Caco-2 (cell line): ENCODE measurements at regions of chr22 and their contacts with region 1.

Region 1: GRCh38 chr22:46116491-46116958 is 33.8 kb upstream of the PPARA start:
- DNase-seq: peak; percentile 90 to 94
- H3K4me3 ChIP-seq: no peak overlapping the region
- H3K4me3 Mint-ChIP-seq: no peak overlapping the region
- H3K27ac Mint-ChIP-seq: no peak overlapping the region
- H3K4me1 ChIP-seq: peaks cover 7% of the 10 kb centered on the region
- H3K4me1 Mint-ChIP-seq: no peaks in the 10 kb centered on the region
- H3K27me3 ChIP-seq: no peaks in the 10 kb centered on the region
- H3K27me3 Mint-ChIP-seq: no peaks in the 10 kb centered on the region
- CTCF ChIP-seq: peak; percentile 80 to 98

Region 2: DNA sequence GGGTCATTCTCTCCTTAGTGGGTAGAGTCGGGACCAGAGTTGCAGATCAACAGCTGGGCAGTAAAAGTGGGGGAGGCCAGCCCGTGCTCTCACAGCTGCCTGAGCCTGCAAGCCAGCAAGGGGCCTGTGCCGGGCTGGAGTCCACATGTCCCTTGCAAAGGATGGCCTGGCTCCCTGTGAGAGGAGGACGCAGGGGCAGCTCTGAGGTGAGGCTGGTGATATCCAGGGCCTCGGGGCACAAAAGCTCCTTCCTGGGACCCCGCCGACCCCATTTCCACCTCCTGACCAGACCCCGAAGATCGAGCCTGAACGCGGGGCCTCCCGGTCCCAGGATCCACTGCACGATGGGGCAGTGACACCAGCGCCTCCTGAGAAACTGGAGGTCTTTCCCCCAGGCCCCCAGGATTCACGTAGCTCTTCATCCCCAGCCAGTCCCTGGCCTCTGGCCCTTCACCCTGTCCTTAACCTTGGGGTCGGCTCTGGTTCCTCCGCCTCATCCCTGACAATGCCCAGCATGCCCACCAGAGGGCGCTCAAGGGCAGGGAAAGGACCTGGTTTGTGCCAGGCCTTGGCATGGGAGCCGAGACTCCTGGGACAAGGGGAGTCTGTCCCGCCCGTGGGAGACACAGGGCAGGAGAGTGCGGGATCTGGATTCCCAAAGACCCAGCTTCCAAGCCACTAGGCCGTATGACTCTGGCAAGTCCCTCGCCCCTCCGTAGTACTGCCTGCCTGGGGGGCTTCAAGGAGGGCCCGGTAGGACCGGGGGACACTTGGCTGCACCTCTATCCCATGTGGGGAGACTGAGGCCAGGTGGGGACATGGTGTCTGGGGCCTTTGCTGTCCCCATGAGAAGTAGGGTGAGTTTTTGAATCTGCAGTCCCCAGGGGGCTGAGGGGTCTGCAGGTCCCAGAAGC is 121.8 kb before region 1 on chr22:
- CTCF ChIA-PET with region 1: interaction called, 4 read pairs
- POLR2A ChIA-PET with region 1: no interaction called
- intact Hi-C with region 1: loop called (anchors 1 kb)
- DNase-seq: peak; percentile 73 to 90
- H3K4me3 ChIP-seq: no peak overlapping the region
- H3K4me3 Mint-ChIP-seq: no peak overlapping the region
- H3K27ac Mint-ChIP-seq: no peak overlapping the region
- H3K4me1 ChIP-seq: no peaks in the 10 kb centered on the region
- H3K4me1 Mint-ChIP-seq: no peaks in the 10 kb centered on the region
- H3K27me3 ChIP-seq: no peaks in the 10 kb centered on the region
- H3K27me3 Mint-ChIP-seq: no peaks in the 10 kb centered on the region
- CTCF ChIP-seq: peak; percentile 88 to 95

Region 3: DNA sequence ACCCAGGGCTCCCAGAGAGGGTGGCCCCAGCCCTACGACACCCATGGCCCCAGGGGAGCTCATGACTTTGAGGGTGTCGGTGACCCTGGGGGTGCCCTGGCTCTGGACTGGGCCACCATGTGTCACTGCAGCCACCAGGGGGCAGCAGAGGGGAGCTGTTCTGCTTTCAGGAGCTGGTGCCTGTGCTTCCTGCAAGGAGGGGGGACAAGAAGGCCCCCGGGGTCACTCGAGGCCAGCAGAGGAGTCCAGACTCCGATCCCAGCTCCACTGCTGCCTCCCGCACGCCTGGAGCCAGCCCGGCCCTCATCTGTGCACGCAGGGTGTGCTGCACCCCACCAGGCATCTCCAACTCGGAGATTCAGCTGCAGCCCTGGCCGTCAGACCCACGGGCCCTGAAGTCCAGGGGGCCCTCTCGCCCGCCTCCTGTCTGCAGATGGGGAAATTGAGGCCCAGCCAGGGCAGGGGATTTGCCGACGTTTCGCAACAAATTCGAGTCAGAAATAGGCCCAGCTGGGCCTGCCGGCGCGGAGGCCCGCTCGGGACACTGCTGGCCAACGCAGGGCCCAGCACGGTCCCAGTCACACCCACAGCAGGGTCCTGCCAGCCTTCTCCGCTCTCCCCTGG is 110.0 kb before region 1 on chr22:
- CTCF ChIA-PET with region 1: interaction called, 97 read pairs
- POLR2A ChIA-PET with region 1: interaction called, 11 read pairs
- intact Hi-C with region 1: loop called (anchors 1 kb)
- DNase-seq: peak; percentile 89 to 90
- H3K4me3 ChIP-seq: no peak overlapping the region
- H3K4me3 Mint-ChIP-seq: no peak overlapping the region
- H3K27ac Mint-ChIP-seq: no peak overlapping the region
- H3K4me1 ChIP-seq: peaks cover 8% of the 10 kb centered on the region; the same call in 1 of the 2 replicates
- H3K4me1 Mint-ChIP-seq: no peaks in the 10 kb centered on the region
- H3K27me3 ChIP-seq: no peaks in the 10 kb centered on the region
- H3K27me3 Mint-ChIP-seq: no peaks in the 10 kb centered on the region
- CTCF ChIP-seq: peak; percentile 87 to 90

Region 4: DNA sequence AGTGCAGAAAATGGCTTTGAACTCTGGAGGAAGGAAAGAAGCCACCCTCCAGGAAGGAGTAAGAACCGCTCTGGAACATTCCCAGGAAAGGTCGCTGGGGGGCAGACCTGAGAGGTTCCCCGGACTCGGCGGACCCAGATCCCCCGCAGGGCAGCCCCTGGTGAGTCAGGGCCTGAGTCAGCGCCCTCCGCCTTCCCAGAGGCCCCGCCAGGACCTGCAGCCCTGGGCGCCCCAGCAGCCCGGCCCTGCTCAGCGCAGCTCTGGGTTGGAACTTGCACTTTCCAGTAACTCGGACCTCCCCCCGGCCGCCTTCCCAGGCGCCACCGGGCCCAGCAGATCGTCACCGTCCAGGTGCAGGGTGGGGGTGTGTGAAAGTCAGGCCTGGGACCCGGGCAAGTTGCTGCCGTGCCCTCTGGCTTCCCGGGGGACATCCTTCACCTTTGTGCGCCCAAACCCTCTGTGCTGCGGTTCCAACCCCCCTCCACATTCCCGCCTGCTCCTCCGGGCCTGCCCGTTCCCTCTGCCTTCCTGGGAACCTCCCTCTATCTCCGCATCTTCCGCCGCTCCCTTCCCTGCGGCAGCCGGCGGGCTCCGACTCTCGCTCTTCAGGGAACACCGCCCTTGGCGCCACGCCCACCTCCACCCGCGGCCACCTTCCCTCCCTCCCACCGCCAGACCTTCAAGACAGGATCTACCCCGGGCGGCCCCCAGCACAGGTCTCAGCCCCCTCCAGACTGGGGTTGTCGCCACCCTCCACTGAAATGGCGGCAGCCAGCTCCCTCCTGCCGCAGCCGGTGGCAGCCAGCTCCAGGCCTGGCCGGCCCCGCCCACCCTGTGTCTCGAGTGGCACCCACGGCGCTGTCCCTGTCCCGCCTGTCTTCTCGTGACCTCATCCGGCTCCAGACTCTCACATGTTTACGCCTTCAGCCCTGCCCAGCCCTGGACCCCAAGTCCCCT is 102.8 kb before region 1 on chr22:
- CTCF ChIA-PET with region 1: interaction called, 14 read pairs
- POLR2A ChIA-PET with region 1: no interaction called
- intact Hi-C with region 1: loop called (anchors 1 kb)
- DNase-seq: peak; percentile 96
- H3K4me3 ChIP-seq: peak overlapping the region; percentile 70
- H3K4me3 Mint-ChIP-seq: peak overlapping the region; percentile 73
- H3K27ac Mint-ChIP-seq: peak overlapping the region; percentile 83
- H3K4me1 ChIP-seq: peaks cover 16% of the 10 kb centered on the region
- H3K4me1 Mint-ChIP-seq: no peaks in the 10 kb centered on the region
- H3K27me3 ChIP-seq: no peaks in the 10 kb centered on the region
- H3K27me3 Mint-ChIP-seq: no peaks in the 10 kb centered on the region
- CTCF ChIP-seq: peak; percentile 74 to 87

Region 5: GRCh38 chr22:46079861-46080821 is 36.4 kb before region 1 on chr22:
- CTCF ChIA-PET with region 1: no interaction called
- POLR2A ChIA-PET with region 1: no interaction called
- intact Hi-C with region 1: no loop called
- DNase-seq: peak in 1 of 2 experiments; percentile 9
- H3K4me3 ChIP-seq: no peak overlapping the region
- H3K4me3 Mint-ChIP-seq: no peak overlapping the region
- H3K27ac Mint-ChIP-seq: no peak overlapping the region
- H3K4me1 ChIP-seq: peaks cover 3% of the 10 kb centered on the region
- H3K4me1 Mint-ChIP-seq: peaks cover 6% of the 10 kb centered on the region
- H3K27me3 ChIP-seq: no peaks in the 10 kb centered on the region
- H3K27me3 Mint-ChIP-seq: no peaks in the 10 kb centered on the region
- CTCF ChIP-seq: no peak